MCF 10A (cell line): ENCODE measurements at regions of chr6 and their contacts with region 1.

Region 1: DNA sequence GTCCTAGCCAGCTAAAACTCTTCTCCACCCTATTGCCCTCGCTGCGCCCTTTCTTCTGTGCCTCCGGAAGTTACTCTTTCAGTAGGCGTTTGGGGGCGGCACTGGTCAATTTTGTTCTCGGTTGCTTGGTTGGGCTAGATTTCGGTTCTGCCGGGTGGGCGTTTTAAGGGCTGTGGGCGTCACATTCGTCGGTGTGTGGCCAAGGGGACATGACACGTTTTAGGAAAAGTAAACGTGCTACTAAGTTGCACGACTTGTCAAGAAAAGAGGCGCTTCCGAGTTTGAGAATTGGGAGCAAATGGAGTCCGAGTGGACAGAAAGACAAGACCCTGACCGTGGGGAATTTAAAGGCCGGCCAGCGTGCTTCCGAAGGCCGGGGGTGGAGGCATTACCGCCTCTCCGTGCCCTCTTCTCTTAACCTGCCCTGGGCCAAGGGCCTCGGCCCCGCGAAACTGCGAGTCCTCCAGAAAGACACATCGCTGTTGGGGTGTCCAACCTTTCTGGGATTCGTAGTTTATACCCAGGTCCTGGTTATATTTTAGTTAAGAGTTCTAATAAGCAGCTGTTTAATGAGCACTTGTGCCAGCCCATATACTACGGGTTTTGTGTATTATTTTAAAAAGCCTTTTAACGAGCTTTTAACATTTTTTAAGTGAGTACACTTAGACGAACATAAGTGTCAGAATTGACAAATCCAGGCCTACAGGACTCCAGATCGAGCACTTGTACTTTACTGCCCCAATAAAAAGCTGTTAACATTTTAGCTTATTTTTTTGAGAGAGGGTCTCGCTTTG is 661 bp upstream of the BAG6 start:
- DNase-seq: no peak
- H3K4me3 Mint-ChIP-seq: peak overlapping the region; percentile 100
- H3K27ac Mint-ChIP-seq: peak overlapping the region; percentile 98
- H3K4me1 Mint-ChIP-seq: peaks cover 36% of the 10 kb centered on the region
- H3K27me3 Mint-ChIP-seq: no peaks in the 10 kb centered on the region
- CTCF ChIP-seq: no peak

Region 2: DNA sequence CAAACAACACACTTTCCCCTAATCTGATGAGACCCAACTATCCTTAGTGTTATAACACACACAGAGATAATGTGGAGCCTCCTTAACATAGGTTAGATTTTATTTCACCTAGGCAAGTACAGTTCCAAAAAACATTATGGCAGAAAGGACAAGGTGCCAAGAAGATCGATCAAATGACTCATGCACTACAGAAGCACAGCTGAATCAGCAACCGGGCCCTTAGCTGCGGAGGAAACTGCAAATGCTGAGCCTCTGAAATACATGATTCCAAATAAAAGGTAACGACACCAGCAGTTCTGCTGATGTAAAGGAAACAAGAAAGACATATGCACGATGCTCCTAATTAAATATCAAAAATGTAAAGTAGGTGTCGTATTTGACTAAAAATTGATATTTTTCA is 689.5 kb before region 1 on chr6:
- CTCF ChIA-PET with region 1: no interaction called
- POLR2A ChIA-PET with region 1: no interaction called
- intact Hi-C with region 1: no loop called
- DNase-seq: peak; percentile 41
- H3K4me3 Mint-ChIP-seq: no peak overlapping the region
- H3K27ac Mint-ChIP-seq: no peak overlapping the region
- H3K4me1 Mint-ChIP-seq: peaks cover 21% of the 10 kb centered on the region
- H3K27me3 Mint-ChIP-seq: no peaks in the 10 kb centered on the region
- CTCF ChIP-seq: no peak

Region 3: GRCh38 chr6:31097568-31098053 is 555.5 kb before region 1 on chr6:
- CTCF ChIA-PET with region 1: no interaction called
- POLR2A ChIA-PET with region 1: no interaction called
- intact Hi-C with region 1: no loop called
- DNase-seq: no peak
- H3K4me3 Mint-ChIP-seq: no peak overlapping the region
- H3K27ac Mint-ChIP-seq: no peak overlapping the region
- H3K4me1 Mint-ChIP-seq: peaks cover 21% of the 10 kb centered on the region
- H3K27me3 Mint-ChIP-seq: no peaks in the 10 kb centered on the region
- CTCF ChIP-seq: no peak

Region 4: GRCh38 chr6:31541658-31542521 is 111.2 kb before region 1 on chr6 and contains the start of gene DDX39B:
- CTCF ChIA-PET with region 1: interaction called, 4 read pairs
- POLR2A ChIA-PET with region 1: interaction called, 59 read pairs
- intact Hi-C with region 1: loop called (anchors 2 kb)
- DNase-seq: peak; percentile 97
- H3K4me3 Mint-ChIP-seq: peak within 1 kb of the TSS; percentile 71
- H3K27ac Mint-ChIP-seq: peak within 1 kb of the TSS; percentile 96
- H3K4me1 Mint-ChIP-seq: peaks cover 40% of the 10 kb centered on the region
- H3K27me3 Mint-ChIP-seq: no peaks in the 10 kb centered on the region
- CTCF ChIP-seq: no peak
- total RNA-seq, gene DDX39B: 551 and 565 TPM in 2 replicates

Region 5: DNA sequence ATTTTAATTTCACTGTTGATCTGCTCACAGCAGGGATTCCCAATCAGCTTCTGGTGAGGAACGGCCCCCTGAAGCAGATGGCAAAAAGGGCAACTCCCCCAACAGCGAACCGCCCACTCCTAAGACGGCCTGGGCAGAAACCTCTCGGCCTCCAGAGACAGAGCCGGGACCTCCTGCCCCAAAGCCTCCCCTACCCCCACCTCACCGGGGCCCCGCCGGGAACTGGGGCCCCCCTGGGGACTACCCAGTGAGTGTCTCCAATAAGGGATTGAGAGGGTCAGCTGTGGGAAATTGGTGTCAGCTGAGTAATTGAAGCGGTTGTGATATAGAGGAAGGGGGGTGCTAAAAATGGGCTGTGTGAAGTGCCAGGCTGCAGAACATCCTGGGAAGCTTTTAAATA is 26.2 kb before region 1 on chr6:
- CTCF ChIA-PET with region 1: interaction called, 4 read pairs
- POLR2A ChIA-PET with region 1: interaction called, 117 read pairs
- intact Hi-C with region 1: no loop called
- DNase-seq: no peak
- H3K4me3 Mint-ChIP-seq: no peak overlapping the region
- H3K27ac Mint-ChIP-seq: peak overlapping the region; percentile 60
- H3K4me1 Mint-ChIP-seq: peaks cover 10% of the 10 kb centered on the region
- H3K27me3 Mint-ChIP-seq: no peaks in the 10 kb centered on the region
- CTCF ChIP-seq: no peak

Region 6: GRCh38 chr6:31702819-31703522 is 49.8 kb after region 1 on chr6 and contains the start of gene ABHD16A:
- CTCF ChIA-PET with region 1: no interaction called
- POLR2A ChIA-PET with region 1: interaction called, 14 read pairs
- intact Hi-C with region 1: no loop called
- DNase-seq: peak; percentile 98
- H3K4me3 Mint-ChIP-seq: peak within 1 kb of the TSS; percentile 95
- H3K27ac Mint-ChIP-seq: peak within 1 kb of the TSS; percentile 89
- H3K4me1 Mint-ChIP-seq: peaks cover 5% of the 10 kb centered on the region
- H3K27me3 Mint-ChIP-seq: no peaks in the 10 kb centered on the region
- CTCF ChIP-seq: no peak
- total RNA-seq, gene ABHD16A: 32.1 and 42.7 TPM in 2 replicates

Region 7: GRCh38 chr6:31815025-31815838 is 162.1 kb after region 1 on chr6 and contains the starts of genes HSPA1A and HSPA1L:
- CTCF ChIA-PET with region 1: no interaction called
- POLR2A ChIA-PET with region 1: interaction called, 16 read pairs
- intact Hi-C with region 1: no loop called
- DNase-seq: peak; percentile 99
- H3K4me3 Mint-ChIP-seq: peak within 1 kb of the TSS; percentile 89
- H3K27ac Mint-ChIP-seq: peak within 1 kb of the TSS; percentile 97
- H3K4me1 Mint-ChIP-seq: peaks cover 11% of the 10 kb centered on the region
- H3K27me3 Mint-ChIP-seq: no peaks in the 10 kb centered on the region
- CTCF ChIP-seq: no peak
- total RNA-seq, gene HSPA1A: 20.3 and 34.0 TPM in 2 replicates
- total RNA-seq, gene HSPA1L: 0.35 and 0.79 TPM in 2 replicates

Region 8: GRCh38 chr6:31834434-31835198 is 181.5 kb after region 1 on chr6:
- CTCF ChIA-PET with region 1: no interaction called
- POLR2A ChIA-PET with region 1: interaction called, 36 read pairs
- intact Hi-C with region 1: no loop called
- DNase-seq: peak; percentile 87
- H3K4me3 Mint-ChIP-seq: peak overlapping the region; percentile 86
- H3K27ac Mint-ChIP-seq: peak overlapping the region; percentile 99
- H3K4me1 Mint-ChIP-seq: peaks cover 18% of the 10 kb centered on the region
- H3K27me3 Mint-ChIP-seq: no peaks in the 10 kb centered on the region
- CTCF ChIP-seq: no peak

Region 9: DNA sequence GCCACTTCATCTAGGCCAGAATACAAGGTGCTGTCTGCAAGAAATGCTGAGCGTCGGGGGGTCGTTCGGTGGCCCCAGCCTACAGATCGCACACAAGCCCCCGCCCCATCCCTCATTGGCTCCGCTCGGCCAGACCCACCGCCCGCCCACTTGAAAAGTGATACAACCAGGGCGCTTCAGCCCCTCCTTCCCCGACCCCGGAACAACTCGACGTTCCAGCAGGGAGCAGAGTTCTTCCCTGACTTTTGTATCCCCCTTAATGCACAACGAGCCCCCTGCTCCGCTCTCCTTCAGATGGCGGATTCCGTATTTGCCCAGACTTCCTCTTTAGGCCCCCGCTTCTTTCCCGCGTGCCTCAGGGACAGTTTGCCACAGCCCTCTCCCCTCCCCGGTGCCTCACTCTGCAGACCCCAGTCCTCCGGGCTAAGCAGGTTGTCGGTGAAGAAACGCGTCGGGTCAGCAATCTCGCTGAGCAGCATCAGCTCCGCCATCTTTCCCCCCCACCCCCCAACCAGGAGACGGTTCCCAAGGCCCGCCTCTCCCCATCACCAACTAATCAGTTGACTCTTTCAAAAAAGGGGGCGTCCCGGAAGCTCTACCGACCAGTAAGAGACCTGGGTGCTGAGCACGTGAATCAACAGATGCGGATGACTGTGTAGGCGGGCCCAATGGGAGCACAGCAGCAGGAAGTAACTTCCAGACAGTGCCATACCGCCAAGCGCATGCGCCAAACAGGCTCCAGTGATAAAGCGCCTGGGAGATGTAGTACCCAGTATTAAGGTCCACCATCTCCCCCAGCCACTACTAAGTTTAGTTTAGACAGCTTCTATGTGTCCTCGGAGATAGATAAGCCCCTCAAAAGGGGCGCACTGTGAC is 474.8 kb after region 1 on chr6 and contains the start of gene ATF6B:
- CTCF ChIA-PET with region 1: no interaction called
- POLR2A ChIA-PET with region 1: interaction called, 12 read pairs
- intact Hi-C with region 1: no loop called
- DNase-seq: peak; percentile 99
- H3K4me3 Mint-ChIP-seq: peak within 1 kb of the TSS; percentile 99
- H3K27ac Mint-ChIP-seq: peak within 1 kb of the TSS; percentile 96
- H3K4me1 Mint-ChIP-seq: peaks cover 26% of the 10 kb centered on the region
- H3K27me3 Mint-ChIP-seq: no peaks in the 10 kb centered on the region
- CTCF ChIP-seq: no peak
- total RNA-seq, gene ATF6B: 65.6 and 86.5 TPM in 2 replicates

Region 10: GRCh38 chr6:32188381-32189004 is 535.4 kb after region 1 on chr6:
- CTCF ChIA-PET with region 1: no interaction called
- POLR2A ChIA-PET with region 1: no interaction called
- intact Hi-C with region 1: no loop called
- DNase-seq: no peak
- H3K4me3 Mint-ChIP-seq: peak overlapping the region; percentile 83
- H3K27ac Mint-ChIP-seq: peak overlapping the region; percentile 86
- H3K4me1 Mint-ChIP-seq: peaks cover 24% of the 10 kb centered on the region
- H3K27me3 Mint-ChIP-seq: no peaks in the 10 kb centered on the region
- CTCF ChIP-seq: no peak